ENCODE measurements at regions of chr5 and their contacts with region 1.

Region 1: DNA sequence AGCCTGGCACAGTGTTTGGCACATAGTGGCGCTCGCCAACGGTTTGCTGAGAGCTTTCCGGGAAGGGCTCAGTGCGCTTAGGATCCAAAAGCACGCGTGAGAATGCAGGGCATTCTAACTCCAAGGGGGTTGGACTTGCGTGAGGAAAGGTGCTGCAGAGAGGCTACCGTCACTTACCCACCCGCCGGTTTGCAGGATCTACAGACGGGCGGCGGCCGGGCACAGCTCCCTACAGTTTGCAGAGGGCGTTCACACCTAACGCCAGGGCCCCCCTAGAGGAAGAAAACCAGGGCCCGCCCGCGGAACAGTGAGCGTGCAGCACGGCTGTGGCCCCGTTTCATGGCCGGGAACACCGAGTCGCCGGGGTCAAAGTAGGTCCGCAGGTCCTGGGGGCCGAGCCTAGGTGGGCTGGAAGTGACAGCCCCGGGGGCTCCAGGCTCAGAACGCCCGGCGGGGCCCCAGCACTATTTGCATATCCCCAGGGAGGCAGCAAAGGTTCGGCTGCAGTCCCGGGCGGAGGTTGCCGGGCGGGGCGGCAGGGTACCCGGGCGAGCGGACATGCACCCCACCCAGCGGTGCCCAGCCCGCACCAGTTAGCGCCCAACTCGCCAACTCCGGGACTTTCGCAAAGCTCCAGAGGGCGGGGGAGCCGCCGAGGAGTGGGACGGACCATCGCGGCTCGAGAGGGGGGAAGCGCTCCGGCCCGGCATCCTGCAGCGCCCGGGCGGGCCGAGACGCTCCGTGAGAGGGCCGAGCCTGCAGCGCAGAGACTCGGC is 526 bp upstream of the GALNT10 start:
- DNase-seq: peak; percentile 74 to 88 (median 84)
- H3K4me3 ChIP-seq: peak overlapping the region; percentile 96
- H3K27ac ChIP-seq: peak overlapping the region; percentile 8 to 49
- H3K4me1 ChIP-seq: peaks cover 5% of the 10 kb centered on the region
- H3K27me3 ChIP-seq: no peaks in the 10 kb centered on the region
- CTCF ChIP-seq: peak in 2 of 3 donors; percentile 22 to 26
- EP300 ChIP-seq: no peak
- POLR2A ChIP-seq: no peak

Region 2: DNA sequence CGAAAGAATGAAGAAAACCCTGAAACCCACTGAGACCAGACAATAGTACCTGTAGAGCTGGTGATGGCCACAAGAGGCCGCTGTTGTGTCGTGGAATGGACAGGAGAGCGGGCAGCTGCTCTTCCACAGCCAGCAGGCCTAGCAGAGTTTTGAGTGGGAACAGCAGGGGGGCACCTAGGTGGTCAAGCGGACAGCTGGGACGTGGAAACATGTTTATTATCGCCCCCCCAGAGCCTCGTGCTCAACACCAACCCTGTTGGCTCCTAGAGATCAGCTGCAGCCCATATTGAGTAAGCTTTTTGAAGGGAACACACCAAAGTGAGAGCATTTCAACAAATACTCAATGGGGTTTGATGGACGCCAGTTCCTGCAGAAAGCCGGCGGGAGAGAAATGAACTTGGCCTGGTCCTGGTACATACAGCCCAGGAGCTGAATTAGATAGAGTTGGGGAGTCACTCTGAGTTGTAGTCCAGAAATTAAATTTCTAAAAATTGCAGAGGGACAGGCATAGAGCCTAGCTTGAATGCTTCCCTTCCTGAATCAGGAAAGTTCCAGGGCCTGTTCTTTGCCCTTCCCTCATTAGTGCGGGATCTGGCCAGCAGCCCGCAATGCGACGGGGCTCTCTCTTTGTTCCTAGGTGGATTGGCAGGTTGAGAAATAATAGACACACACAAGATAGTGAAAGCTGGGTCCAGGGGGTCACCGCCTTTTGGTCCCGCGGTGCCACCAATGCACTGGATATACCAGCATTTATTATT is 117.4 kb before region 1 on chr5:
- intact Hi-C with region 1: loop called in 1 of 4 experiments (anchors 10 kb)
- DNase-seq: peak; percentile 73 to 89 (median 88)
- H3K4me3 ChIP-seq: no peak overlapping the region
- H3K27ac ChIP-seq: no peak overlapping the region
- H3K4me1 ChIP-seq: no peaks in the 10 kb centered on the region
- H3K27me3 ChIP-seq: no peaks in the 10 kb centered on the region
- CTCF ChIP-seq: peak; percentile 84 to 89 (median 88)
- EP300 ChIP-seq: no peak
- POLR2A ChIP-seq: no peak

Region 3: DNA sequence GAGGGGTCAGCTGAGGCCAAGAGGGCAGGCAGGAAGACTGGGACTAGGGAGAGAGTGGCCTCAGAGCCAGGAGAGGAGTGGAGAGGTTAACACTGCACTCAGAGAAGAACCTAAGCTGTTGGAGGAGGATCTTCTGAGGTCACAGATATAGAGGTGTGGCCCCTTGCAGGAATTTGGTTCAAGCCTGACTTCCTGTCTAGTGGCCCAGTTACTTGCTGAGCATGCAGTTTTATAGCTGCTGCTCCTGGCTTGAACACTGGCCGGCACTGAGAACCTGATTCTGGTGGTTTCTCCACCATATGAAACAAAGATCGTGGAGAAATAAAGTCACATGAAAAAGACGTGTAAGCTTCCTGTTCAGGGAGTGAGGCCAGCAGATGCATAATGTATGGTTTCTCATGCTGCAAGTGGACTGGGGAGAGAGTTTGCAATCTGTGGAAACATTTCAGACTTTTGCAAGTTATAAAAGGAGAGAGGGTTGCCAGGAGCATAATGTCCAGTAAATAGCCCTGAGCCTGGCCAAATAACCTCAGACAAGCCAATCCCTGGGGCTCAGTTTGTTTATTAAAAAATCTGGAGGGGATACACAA is 83.1 kb after region 1 on chr5:
- intact Hi-C with region 1: loop called in 2 of 4 experiments (anchors 5 to 10 kb)
- DNase-seq: peak; percentile 34 to 56 (median 48)
- H3K4me3 ChIP-seq: no peak overlapping the region
- H3K27ac ChIP-seq: peak overlapping the region in 1 of 2 donors; percentile 66
- H3K4me1 ChIP-seq: peaks cover 33% of the 10 kb centered on the region
- H3K27me3 ChIP-seq: no peaks in the 10 kb centered on the region
- CTCF ChIP-seq: no peak
- EP300 ChIP-seq: no peak
- POLR2A ChIP-seq: no peak

Region 4: DNA sequence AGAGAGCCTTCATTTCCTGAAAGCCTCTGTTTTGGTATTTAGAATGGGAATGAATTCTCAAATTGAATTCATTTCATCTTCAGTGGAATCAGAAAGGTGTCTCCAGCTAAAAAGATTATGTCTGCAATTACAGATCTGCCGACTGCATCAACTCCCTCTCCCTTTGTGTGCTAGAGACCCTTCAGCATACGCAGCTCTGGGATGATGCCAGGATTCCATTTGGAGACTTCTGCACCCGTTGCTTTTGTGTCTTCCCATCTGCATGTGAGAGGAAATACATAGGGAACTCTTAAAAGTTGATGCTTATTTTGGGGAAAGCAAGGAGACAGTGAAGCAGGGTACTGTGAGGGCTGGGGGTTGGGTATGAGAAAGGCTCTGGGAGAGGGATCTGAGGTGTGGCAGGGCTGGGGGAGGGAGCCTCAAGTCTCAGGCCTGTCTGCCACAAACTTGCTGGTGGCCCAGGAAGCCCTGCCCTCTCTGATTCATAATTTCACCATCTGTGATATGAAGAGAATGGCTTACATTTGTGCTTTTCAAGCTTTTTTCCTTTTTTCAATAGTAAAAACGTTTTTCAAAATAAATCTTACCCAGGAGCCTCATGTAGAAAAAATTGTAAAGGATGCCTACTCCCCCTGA is 166.1 kb after region 1 on chr5:
- intact Hi-C with region 1: loop called in 1 of 4 experiments (anchors 10 kb)
- DNase-seq: no peak
- H3K4me3 ChIP-seq: no peak overlapping the region
- H3K27ac ChIP-seq: peak overlapping the region; percentile 23 to 78
- H3K4me1 ChIP-seq: peaks cover 49% of the 10 kb centered on the region
- H3K27me3 ChIP-seq: no peaks in the 10 kb centered on the region
- CTCF ChIP-seq: no peak
- EP300 ChIP-seq: no peak
- POLR2A ChIP-seq: no peak

Region 5: GRCh38 chr5:154405078-154405792 is 215.2 kb after region 1 on chr5:
- intact Hi-C with region 1: loop called in 3 of 4 experiments (anchors 5 to 10 kb)
- DNase-seq: peak; percentile 80 to 91 (median 87)
- H3K4me3 ChIP-seq: peak overlapping the region; percentile 32
- H3K27ac ChIP-seq: peak overlapping the region in 1 of 2 donors; percentile 63
- H3K4me1 ChIP-seq: peaks cover 6% of the 10 kb centered on the region
- H3K27me3 ChIP-seq: no peaks in the 10 kb centered on the region
- CTCF ChIP-seq: peak; percentile 82 to 92 (median 87)
- EP300 ChIP-seq: no peak
- POLR2A ChIP-seq: no peak

Region 6: GRCh38 chr5:154467655-154468354 is 277.8 kb after region 1 on chr5:
- intact Hi-C with region 1: no loop called
- DNase-seq: peak; percentile 49 to 86 (median 72)
- H3K4me3 ChIP-seq: no peak overlapping the region
- H3K27ac ChIP-seq: no peak overlapping the region
- H3K4me1 ChIP-seq: no peaks in the 10 kb centered on the region
- H3K27me3 ChIP-seq: no peaks in the 10 kb centered on the region
- CTCF ChIP-seq: peak; percentile 37 to 72 (median 50)
- EP300 ChIP-seq: no peak
- POLR2A ChIP-seq: no peak

Region 7: DNA sequence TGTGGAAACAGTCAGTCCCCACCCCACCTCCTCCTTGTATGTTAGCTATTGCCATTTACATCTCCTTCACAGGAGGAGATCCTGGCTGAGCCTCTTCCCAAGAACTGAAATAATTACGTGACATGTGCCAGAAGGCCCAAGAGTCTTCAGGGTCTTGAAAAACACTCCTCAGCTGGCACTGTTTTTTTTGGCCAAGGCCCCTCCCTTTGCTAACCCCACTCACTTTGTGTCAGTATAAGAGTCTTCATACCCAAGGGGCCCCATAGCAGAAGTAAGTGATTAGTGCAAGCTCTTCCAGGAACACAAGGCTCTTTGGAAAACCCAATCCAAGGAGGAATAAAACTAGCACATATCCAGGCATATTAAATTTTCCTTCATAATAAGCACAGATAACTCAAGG is 559.5 kb after region 1 on chr5:
- intact Hi-C with region 1: loop called in 2 of 4 experiments (anchors 5 kb)
- DNase-seq: no peak
- H3K4me3 ChIP-seq: no peak overlapping the region
- H3K27ac ChIP-seq: no peak overlapping the region
- H3K4me1 ChIP-seq: peaks cover 3% of the 10 kb centered on the region
- H3K27me3 ChIP-seq: no peaks in the 10 kb centered on the region
- CTCF ChIP-seq: no peak
- EP300 ChIP-seq: no peak
- POLR2A ChIP-seq: no peak

Measured in ovary (tissue), 10 donors.